ENCODE measurements at regions of chr6 and their contacts with region 1.

Region 1: DNA sequence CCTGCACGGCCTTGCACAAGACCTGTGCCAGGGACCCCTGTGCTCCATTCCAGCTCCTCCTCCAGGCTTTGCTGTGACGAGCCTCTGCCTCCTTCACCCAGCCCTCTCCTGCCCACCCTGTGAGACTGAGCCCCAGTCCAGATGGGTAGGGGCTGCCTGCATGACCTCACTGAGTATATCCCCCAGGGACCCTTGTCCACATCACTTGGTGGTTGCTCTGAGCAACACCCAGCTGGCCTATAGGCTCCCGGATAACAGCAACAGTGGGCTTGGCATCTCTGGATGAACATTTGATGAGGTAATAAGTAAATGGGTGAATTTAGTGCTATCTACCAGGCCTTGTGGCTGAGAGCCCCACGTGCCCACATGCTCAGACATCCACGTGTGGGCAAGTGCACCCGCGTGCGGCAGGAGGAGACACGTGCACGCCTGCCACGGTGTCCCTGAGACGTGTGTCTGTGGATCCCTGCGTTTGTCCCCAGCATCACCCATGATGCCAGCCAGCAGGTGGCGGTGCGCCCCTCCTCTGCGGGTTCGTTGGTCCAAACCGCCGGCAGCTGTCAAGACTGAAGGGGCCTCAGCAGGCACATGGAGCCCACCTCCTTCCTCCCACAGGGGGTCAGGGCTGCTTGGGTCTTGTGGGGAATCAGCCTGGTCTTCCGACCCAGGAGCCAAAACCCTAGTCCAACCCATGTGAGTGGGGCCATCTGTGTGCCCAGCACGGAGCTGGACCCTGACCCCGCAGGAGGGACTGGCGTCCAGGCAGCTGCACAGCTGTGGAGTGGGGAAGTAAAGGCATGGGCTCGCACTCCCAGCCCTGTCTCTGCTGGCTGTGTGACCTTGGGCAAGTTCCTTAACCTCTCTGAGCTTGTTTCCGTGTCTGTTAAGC is 45.9 kb downstream of the FGD2 start:
- DNase-seq: peak; percentile 37
- H3K4me3 ChIP-seq: peak overlapping the region in 1 of 4 donors; percentile 12
- H3K27ac ChIP-seq: peak overlapping the region; percentile 37 to 83 (median 61)
- H3K4me1 ChIP-seq: peaks cover 45 to 68% (median 45%) of the 10 kb centered on the region in 3 donors
- H3K27me3 ChIP-seq: no peaks in the 10 kb centered on the region
- CTCF ChIP-seq: peak; percentile 84 to 96 (median 92)
- POLR2A ChIP-seq: no peak

Region 2: DNA sequence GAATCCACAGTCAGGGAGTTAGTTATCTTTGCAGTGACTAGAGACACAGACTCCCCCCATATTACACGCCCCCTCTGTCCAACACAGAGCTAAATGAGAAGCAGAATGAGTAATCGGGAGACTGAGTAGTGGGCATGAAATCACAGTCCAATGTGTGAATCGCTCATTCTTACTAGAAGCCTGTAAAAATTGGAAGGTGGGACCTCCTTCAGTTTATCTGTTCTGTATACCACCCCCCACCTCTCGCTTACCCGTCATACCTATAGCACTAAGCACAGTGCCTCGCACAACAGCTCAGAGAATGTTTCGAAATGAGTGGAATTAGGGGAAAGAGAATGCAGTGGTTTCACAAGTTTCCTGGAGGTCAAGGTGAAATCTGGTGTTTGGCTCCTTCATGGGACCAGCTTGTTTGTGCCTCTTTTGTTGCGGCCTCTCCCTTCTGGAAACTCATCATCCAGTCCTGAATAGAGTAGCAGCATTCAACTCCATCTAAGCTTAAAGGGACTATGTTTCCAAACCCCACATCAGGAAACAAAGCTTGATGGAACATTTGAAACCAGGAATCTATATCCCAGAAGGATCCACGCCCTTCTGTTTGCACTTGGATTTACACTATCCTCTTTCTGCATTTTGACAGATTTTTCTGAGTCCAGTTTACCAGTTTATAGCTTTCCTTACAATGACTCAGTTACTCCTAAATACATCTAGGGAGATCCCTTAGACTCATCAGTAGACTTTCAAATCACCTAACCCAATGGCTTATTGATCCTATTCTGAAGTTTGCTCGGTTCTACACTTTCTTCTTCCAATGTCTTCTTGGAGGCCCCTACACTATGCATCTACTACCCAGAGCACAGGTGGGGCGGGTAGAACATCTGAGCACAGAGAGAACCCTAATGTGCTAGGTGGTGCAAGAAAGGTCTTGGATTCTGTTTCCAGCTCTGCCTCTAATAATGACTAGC is 59.4 kb after region 1 on chr6:
- intact Hi-C with region 1: no loop called
- DNase-seq: no peak
- H3K4me3 ChIP-seq: no peak overlapping the region
- H3K27ac ChIP-seq: peak overlapping the region in 1 of 4 donors; percentile 36
- H3K4me1 ChIP-seq: peaks cover 0 to 15% (median 0%) of the 10 kb centered on the region in 3 donors
- H3K27me3 ChIP-seq: no peaks in the 10 kb centered on the region
- CTCF ChIP-seq: no peak
- POLR2A ChIP-seq: no peak

Region 3: GRCh38 chr6:37207903-37208456 is 156.6 kb after region 1 on chr6:
- intact Hi-C with region 1: loop called (anchors 10 kb)
- DNase-seq: peak; percentile 30
- H3K4me3 ChIP-seq: no peak overlapping the region
- H3K27ac ChIP-seq: peak overlapping the region in 1 of 4 donors; percentile 7
- H3K4me1 ChIP-seq: peaks cover 5 to 34% (median 7%) of the 10 kb centered on the region in 3 donors
- H3K27me3 ChIP-seq: no peaks in the 10 kb centered on the region
- CTCF ChIP-seq: peak; percentile 71 to 93 (median 87)
- POLR2A ChIP-seq: no peak